HepG2 (cell line): ENCODE measurements at regions of chr2 and their contacts with region 1.

Region 1: DNA sequence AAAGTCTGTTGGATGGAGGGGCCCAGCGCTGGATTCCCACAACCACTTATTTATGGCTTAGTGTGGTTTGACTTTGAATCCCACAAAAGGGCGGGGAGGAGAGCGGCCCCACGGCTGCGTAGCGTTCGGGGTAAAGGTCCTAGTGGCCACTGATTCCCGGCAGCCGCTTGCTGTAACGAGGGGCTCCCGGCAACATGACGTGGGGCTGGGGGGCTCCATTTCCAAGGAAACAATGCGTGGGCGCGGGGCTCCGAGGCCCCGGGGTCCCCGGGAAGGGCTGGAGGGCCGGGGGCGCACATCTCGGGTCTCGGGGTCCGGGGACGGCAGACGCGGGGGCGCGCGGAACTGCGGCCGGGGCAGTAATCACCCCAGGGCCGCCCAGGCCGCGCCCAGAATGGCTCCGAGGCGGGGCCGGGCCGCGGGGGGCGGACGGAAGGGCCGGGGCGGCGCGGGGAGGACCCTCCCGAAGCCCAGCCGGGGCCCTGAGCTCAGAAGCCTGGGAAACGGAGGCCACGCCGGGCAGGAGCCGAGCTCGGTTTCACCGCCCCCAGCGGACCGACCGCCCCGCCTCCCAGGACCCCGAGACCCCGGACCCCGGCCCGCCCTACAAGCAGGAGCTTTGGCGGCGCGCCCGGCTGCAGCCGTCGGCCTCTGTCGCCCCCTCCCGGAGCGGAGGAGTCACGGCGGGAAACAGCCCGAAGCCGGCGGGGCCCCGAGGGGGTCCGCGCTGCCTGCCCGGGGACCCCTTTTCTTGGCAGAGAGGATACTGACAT is 11.9 kb upstream of the MLPH start:
- DNase-seq: peak; percentile 56
- ATAC-seq: peak; percentile 89
- H3K4me3 ChIP-seq: peak overlapping the region; percentile 73 to 92 (median 85)
- H3K27ac ChIP-seq: peak overlapping the region; percentile 74
- H3K4me1 ChIP-seq: peaks cover 15% of the 10 kb centered on the region
- H3K27me3 ChIP-seq: peaks cover 0 to 34% of the 10 kb centered on the region in 2 experiments; a peak in 4 of 5 replicates
- CTCF ChIP-seq: peak; percentile 90
- EP300 ChIP-seq: peak in 1 of 2 experiments; percentile 20; a peak in 1 of 4 replicates
- POLR2A ChIP-seq: peak; percentile 63 to 85
- RAD21 ChIP-seq: peak; percentile 67

Region 2: GRCh38 chr2:237092920-237093781 is 382.0 kb before region 1 on chr2:
- CTCF ChIA-PET with region 1: no interaction called
- POLR2A ChIA-PET with region 1: no interaction called
- in situ Hi-C with region 1: no loop called
- intact Hi-C with region 1: no loop called
- DNase-seq: no peak
- ATAC-seq: peak; percentile 65
- H3K4me3 ChIP-seq: no peak overlapping the region
- H3K27ac ChIP-seq: no peak overlapping the region
- H3K4me1 ChIP-seq: peaks cover 10% of the 10 kb centered on the region
- H3K27me3 ChIP-seq: no peaks in the 10 kb centered on the region
- CTCF ChIP-seq: peak; percentile 53
- EP300 ChIP-seq: no peak
- POLR2A ChIP-seq: no peak
- RAD21 ChIP-seq: no peak

Region 3: GRCh38 chr2:237378650-237379049 is 96.5 kb before region 1 on chr2:
- CTCF ChIA-PET with region 1: no interaction called
- POLR2A ChIA-PET with region 1: no interaction called
- in situ Hi-C with region 1: no loop called
- intact Hi-C with region 1: no loop called
- DNase-seq: no peak
- ATAC-seq: no peak
- H3K4me3 ChIP-seq: no peak overlapping the region
- H3K27ac ChIP-seq: no peak overlapping the region
- H3K4me1 ChIP-seq: no peaks in the 10 kb centered on the region
- H3K27me3 ChIP-seq: peaks cover 9 to 71% of the 10 kb centered on the region in 2 experiments
- CTCF ChIP-seq: no peak
- EP300 ChIP-seq: no peak
- POLR2A ChIP-seq: no peak
- RAD21 ChIP-seq: no peak

Region 4: GRCh38 chr2:237566401-237567235 is 91.5 kb after region 1 on chr2 and contains the start of gene PRLH:
- CTCF ChIA-PET with region 1: interaction called, 31 read pairs
- POLR2A ChIA-PET with region 1: interaction called, 5 read pairs
- in situ Hi-C with region 1: no loop called
- intact Hi-C with region 1: loop called (anchors 1 kb)
- DNase-seq: no peak
- ATAC-seq: peak; percentile 70
- H3K4me3 ChIP-seq: no peak within 1 kb of the TSS
- H3K27ac ChIP-seq: no peak within 1 kb of the TSS
- H3K4me1 ChIP-seq: no peaks in the 10 kb centered on the region; the same call in 1 of the 2 replicates
- H3K27me3 ChIP-seq: peaks cover 0 to 38% of the 10 kb centered on the region in 2 experiments; a peak in 4 of 5 replicates
- CTCF ChIP-seq: peak; percentile 20; the same call in 1 of the 2 replicates
- EP300 ChIP-seq: no peak
- POLR2A ChIP-seq: no peak
- RAD21 ChIP-seq: no peak
- total RNA-seq, gene PRLH: not detected in 2 replicates

Region 5: GRCh38 chr2:237572021-237572741 is 97.1 kb after region 1 on chr2:
- CTCF ChIA-PET with region 1: interaction called, 31 read pairs
- POLR2A ChIA-PET with region 1: interaction called, 5 read pairs
- in situ Hi-C with region 1: no loop called
- intact Hi-C with region 1: loop called (anchors 1 kb)
- DNase-seq: peak; percentile 84
- ATAC-seq: peak; percentile 91
- H3K4me3 ChIP-seq: no peak overlapping the region; a peak in 1 of 6 replicates
- H3K27ac ChIP-seq: no peak overlapping the region
- H3K4me1 ChIP-seq: peaks cover 19% of the 10 kb centered on the region
- H3K27me3 ChIP-seq: peaks cover 0 to 13% of the 10 kb centered on the region in 2 experiments; a peak in 3 of 5 replicates
- CTCF ChIP-seq: peak; percentile 100
- EP300 ChIP-seq: no peak
- POLR2A ChIP-seq: 0 out of 4 replicates have a peak, but pooled peaks of 1 of the 2 experiments have one; percentile 30
- RAD21 ChIP-seq: peak; percentile 100